HEK293 (cell line): ENCODE measurements at regions of chr17 and their contacts with region 1.

Region 1: DNA sequence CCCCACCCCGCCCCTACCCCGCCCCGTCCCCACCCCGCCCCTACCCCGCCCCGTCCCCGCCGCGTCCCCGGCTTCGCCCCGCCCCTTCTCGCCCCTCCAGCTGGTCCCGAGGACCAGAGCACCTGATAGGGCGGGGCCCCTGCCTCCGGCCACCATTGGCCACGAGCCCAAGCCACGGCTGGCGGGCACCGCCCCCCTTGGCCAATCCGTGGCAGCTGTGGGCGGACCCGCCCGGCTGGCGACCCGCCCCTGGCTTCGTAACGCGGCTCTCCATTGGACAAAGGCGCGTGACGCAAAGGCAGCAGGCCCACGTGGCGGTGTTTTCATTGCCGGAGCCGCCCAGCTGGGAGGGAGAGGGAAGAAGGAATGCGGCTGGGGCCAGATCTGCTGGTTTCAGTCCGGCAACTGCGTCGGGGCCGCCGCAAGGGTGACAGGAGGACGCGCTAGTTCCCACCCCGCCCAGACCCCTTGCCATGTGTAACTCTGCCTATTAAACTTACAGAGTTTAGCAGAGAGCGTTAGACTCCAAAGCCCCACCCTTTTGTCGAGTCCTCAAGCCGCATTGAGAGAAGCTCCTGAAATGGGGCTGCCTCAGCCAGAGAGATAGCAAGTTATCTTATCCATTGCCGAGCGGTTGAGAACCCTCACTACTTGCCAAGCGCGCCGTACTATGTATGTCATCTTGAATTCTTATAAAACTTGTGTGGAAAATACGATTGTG is 403 bp upstream of the WIPI1 start:
- H3K4me3 ChIP-seq: peak overlapping the region; percentile 42
- H3K27ac ChIP-seq: no peak overlapping the region
- H3K4me1 ChIP-seq: peaks cover 14% of the 10 kb centered on the region
- CTCF ChIP-seq: no peak

Region 2: DNA sequence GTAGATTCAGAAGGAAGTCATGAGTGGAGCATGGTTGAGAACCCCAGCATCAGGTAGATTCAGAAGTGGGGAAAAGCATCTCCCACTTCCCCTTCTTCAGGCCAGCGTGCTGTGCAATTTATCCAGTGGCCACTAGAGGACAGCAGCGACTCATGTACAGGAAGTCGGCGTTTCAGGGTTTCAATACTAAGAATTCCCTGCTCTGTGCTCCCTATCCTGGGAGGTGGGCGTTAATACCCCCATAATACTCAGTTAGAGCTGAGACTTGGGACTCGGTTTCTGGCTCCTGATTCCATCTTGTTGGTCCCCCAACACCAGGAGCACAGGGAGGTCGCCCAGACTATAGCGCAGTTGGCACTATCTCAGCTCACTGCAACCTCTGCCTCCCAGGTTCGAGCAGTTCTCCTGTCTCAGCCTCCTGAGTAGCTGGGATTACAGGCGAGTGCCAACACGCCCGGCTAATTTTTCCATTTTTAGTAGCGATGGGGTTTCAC is 285.2 kb before region 1 on chr17:
- CTCF ChIA-PET with region 1: interaction called, 30 read pairs
- POLR2A ChIA-PET with region 1: interaction called, 5 read pairs
- H3K4me3 ChIP-seq: no peak overlapping the region
- H3K27ac ChIP-seq: no peak overlapping the region
- H3K4me1 ChIP-seq: no peaks in the 10 kb centered on the region
- CTCF ChIP-seq: peak; percentile 89

Region 3: DNA sequence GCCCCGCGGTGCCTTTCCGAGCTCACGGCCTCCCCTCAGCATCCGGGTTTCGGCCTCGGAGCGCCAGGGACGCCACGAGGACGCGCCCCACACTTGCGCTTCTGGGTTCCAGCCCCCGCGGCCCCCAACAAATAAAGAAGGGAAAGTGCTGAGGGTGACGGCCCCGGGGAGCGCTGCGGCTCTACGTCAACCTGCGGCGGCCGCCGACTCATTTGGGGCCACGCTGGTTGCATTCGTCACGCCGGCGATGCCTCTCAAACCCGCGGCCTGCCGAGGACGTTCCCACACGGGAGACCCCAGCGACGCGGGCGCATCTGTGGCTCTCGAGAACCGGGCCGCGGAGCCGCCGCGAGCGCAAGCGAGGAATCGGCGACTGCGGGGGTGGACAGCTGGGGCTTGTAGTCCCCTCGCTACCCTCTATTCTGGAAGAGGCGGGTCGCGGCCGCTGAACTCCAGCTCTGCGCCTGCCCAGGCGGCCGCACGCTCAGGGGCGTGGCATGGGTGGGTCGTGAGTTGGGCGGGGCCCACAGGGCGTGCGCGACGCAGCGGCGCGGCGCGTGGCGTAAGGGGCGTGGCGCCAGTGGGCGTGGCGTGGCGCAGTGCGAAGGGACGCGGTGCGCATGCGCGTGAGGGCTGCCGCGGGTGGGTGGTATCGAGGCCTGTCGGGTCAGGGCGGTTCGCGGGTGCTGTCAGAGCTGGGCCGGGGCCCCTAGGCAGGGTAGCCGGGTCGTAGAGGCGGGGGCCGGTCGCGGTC is 210.1 kb before region 1 on chr17 and contains the start of gene AMZ2:
- CTCF ChIA-PET with region 1: no interaction called
- POLR2A ChIA-PET with region 1: interaction called, 32 read pairs
- H3K4me3 ChIP-seq: peak within 1 kb of the TSS; percentile 98
- H3K27ac ChIP-seq: peak within 1 kb of the TSS; percentile 89
- H3K4me1 ChIP-seq: peaks cover 5% of the 10 kb centered on the region
- CTCF ChIP-seq: peak; percentile 36; the same call in 1 of the 2 replicates

Region 4: DNA sequence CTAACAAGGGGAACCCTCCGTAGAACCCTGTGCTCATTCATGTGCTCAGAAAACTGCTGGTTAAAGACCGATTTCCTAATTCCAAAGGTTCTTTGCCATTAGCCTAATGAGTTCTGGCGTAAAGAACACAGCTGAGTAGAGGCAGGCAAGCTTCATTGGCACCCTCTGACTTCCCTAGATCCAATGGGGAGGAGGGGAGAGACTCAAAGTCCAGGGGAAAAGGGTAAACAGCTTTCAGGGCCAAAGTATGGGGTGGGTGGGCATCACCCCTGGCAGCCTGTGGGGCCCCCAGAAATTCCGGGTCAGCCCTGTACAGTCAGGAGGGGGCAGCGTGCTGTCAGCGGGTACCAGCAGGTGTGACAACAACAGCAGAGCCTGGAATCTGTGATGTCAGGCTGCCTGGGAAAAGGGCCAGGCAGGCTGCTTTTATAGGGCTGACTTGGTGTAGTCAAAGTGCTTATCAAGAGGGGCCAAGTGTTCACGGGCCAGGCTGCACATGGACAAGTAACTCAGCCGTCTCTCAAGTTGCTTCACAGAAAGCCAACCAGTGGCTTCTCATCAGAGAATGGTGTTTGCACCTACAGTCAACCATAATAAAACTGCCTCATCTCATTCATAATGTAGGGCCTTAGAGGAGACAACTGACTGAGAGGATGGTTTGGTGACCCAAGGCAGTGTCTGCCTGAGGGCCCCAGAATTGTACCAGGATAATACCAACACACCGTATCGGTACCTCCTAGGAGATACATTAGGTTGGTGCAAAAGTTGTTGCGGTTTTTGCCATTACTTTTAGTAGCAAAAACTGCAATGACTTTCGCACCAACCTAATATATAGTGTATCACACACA is 71.2 kb before region 1 on chr17:
- CTCF ChIA-PET with region 1: no interaction called
- POLR2A ChIA-PET with region 1: no interaction called
- H3K4me3 ChIP-seq: no peak overlapping the region
- H3K27ac ChIP-seq: no peak overlapping the region
- H3K4me1 ChIP-seq: peaks cover 6% of the 10 kb centered on the region
- CTCF ChIP-seq: no peak

Region 5: DNA sequence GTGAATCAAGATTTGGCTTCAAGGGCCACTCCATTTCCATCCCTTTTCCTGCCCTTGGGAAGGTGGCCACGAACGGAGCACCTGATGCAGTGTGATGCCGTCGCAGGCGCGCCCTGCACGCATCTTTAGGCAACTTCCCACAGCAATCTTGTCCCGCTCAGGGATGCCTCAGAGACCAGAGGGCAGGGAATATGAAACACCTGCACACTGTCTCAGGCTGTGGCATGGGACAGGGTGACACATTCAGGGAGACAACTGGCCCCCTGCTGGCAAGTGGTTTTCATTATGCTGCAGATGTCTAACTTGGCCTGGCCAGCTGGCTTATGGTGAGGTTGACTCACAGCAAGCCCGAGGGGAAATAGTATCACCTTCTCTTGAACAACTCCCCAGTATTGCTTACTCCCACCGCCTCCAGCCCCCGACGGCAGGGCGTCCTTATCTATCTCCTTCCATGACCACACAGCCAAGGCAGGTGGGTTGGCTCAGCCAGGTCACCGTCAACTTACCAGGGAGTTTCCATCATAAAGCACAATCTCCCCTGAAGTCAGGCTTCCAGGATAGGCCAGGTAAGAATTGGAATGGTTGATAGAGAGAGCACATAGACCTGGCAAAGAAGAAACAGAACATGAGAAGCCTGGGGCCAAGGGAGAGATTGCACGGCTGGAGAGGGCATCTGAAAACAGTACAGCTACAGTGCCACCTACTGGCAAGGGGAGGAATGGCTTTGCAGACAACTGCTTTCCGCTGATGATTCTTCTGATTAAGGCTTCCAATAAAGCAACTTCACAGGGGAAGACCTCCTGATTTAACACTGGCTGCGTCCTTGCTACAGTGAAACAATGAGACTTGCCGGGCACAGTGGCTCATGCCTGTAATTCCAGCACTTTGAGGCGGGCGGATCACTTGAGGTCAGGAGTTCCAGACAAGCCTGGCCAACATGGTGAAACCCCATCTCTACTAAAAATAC is 21.5 kb before region 1 on chr17:
- CTCF ChIA-PET with region 1: interaction called, 17 read pairs
- POLR2A ChIA-PET with region 1: no interaction called
- H3K4me3 ChIP-seq: no peak overlapping the region
- H3K27ac ChIP-seq: no peak overlapping the region
- H3K4me1 ChIP-seq: peaks cover 6% of the 10 kb centered on the region
- CTCF ChIP-seq: peak; percentile 79

Region 6: DNA sequence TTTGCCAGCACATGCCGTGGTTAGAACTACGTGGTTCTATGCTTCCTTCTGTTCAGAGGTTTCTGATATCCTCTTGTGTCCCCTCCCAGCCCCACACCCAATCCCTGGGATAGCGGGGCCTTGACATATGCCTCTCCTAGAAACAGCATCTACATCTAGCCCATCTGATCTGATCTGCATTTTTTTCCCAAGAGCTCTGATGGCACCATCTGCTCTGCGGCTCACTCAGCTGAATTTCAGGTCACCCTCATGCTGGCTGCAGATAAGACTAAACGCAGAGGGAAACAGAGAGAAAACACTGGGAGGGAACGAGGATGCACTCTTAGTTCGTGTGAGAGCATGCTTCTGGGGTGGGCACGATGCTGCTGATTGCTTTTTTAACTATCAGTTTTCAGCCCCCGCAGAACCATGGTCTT is 11.1 kb before region 1 on chr17:
- CTCF ChIA-PET with region 1: interaction called, 13 read pairs
- POLR2A ChIA-PET with region 1: no interaction called
- H3K4me3 ChIP-seq: no peak overlapping the region
- H3K27ac ChIP-seq: no peak overlapping the region
- H3K4me1 ChIP-seq: no peaks in the 10 kb centered on the region
- CTCF ChIP-seq: no peak

Region 7: GRCh38 chr17:68489919-68490318 is 32.2 kb after region 1 on chr17:
- CTCF ChIA-PET with region 1: no interaction called
- POLR2A ChIA-PET with region 1: no interaction called
- H3K4me3 ChIP-seq: no peak overlapping the region
- H3K27ac ChIP-seq: no peak overlapping the region
- H3K4me1 ChIP-seq: no peaks in the 10 kb centered on the region
- CTCF ChIP-seq: no peak

Region 8: DNA sequence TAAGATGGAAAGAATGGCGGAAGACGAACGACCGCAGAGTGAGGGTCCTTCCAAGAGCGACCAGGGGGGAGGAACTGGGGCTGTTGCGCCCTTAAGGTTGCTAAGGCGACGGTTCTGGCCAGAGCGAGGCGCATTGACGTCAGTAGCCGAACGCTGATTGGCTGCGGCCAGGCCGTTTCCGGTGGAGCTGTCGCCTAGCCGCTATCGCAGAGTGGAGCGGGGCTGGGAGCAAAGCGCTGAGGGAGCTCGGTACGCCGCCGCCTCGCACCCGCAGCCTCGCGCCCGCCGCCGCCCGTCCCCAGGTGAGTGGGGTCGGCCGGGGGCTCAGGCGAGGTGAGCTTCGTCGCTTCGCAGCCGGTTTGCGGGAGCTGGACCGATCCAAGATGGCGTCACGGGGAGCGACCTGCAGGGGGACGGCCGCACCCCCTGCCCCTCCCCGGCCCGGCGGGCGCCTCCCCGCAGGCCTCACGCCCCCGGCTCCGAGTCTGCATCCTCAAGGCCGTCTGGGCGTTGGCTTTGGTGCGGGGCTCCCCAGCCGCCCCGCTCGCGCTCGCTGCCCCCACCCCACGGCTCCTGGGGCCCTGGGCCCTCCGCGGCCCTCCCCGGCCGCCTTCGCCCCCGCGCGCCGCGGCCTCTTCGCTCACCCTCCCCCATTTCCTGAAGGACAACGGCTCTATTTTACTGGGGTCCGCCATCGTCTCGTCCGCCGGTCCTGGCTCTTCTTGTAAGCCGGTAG is 54.7 kb after region 1 on chr17 and contains the start of gene PRKAR1A:
- CTCF ChIA-PET with region 1: interaction called, 4 read pairs
- POLR2A ChIA-PET with region 1: interaction called, 18 read pairs
- H3K4me3 ChIP-seq: peak within 1 kb of the TSS; percentile 83
- H3K27ac ChIP-seq: peak within 1 kb of the TSS; percentile 95
- H3K4me1 ChIP-seq: peaks cover 20% of the 10 kb centered on the region
- CTCF ChIP-seq: peak; percentile 69; the same call in 1 of the 2 replicates